Heart left ventricle (tissue), 16 donors: ENCODE measurements at regions of chr1 and their contacts with region 1.

Region 1: DNA sequence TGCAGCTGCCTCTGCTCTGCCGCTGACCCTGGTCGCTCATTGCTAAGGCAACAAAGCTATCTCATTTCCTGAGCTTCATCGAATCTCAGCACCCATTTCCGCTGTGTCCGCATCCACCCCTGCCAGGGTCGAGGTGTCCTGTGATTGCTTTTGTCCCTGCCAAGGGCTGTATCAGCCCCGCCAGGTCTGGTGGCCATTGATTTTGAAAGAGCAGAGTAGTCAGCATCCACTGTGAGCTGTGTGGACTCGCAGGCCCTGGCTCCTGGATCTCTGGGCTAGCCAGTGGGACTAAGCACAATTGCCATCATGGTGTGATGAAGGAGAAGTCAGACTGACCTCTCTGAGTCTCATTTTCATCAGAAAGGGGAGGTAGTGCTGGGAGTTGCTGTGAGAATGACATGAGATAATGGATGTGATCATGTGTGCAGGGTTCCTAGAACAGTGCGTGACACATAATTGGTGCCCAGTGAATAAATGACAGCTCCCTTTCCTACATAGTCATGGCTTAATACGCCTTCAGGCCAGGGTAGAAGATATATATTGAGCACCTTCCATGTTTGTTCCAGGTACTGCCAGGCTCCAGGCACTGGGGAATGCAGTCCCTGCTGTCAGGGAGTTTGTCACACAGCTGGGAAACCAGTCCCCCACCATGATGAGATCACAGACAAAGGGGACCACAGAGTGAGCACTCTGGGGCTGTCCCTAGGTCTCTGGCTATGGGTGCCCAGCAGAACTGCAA is 32.1 kb downstream of the NAV1 start:
- DNase-seq: peak in 2 of 5 donors; percentile 29 to 59
- ATAC-seq: peak; percentile 43 to 56 (median 46)
- H3K4me3 ChIP-seq: no peak overlapping the region
- H3K27ac ChIP-seq: peak overlapping the region in 6 of 12 donors; percentile 38 to 68 (median 52)
- H3K4me1 ChIP-seq: peaks cover 10 to 75% (median 54%) of the 10 kb centered on the region in 12 donors
- H3K27me3 ChIP-seq: no peaks in the 10 kb centered on the region
- CTCF ChIP-seq: no peak
- POLR2A ChIP-seq: no peak

Region 2: GRCh38 chr1:201376464-201377374 is 194.3 kb before region 1 on chr1:
- intact Hi-C with region 1: no loop called
- DNase-seq: peak in 1 of 5 donors; percentile 41
- ATAC-seq: peak in 3 of 4 donors; percentile 3 to 9 (median 5)
- H3K4me3 ChIP-seq: peak overlapping the region; percentile 42 to 76 (median 67)
- H3K27ac ChIP-seq: peak overlapping the region; percentile 79 to 99 (median 96)
- H3K4me1 ChIP-seq: peaks cover 0 to 41% (median 10%) of the 10 kb centered on the region in 12 donors
- H3K27me3 ChIP-seq: no peaks in the 10 kb centered on the region
- CTCF ChIP-seq: peak in 9 of 12 donors; percentile 20 to 52 (median 31)
- POLR2A ChIP-seq: no peak

Region 3: GRCh38 chr1:201530741-201531531 is 40.1 kb before region 1 on chr1:
- intact Hi-C with region 1: no loop called
- DNase-seq: peak; percentile 89 to 91 (median 90)
- ATAC-seq: peak; percentile 75 to 91 (median 88)
- H3K4me3 ChIP-seq: no peak overlapping the region
- H3K27ac ChIP-seq: peak overlapping the region; percentile 25 to 86 (median 64)
- H3K4me1 ChIP-seq: peaks cover 4 to 49% (median 35%) of the 10 kb centered on the region in 12 donors
- H3K27me3 ChIP-seq: no peaks in the 10 kb centered on the region
- CTCF ChIP-seq: peak; percentile 75 to 90 (median 82)
- POLR2A ChIP-seq: no peak

Region 4: GRCh38 chr1:201625226-201625761 is 54.2 kb after region 1 on chr1:
- intact Hi-C with region 1: loop called in 3 of 10 experiments (anchors 5 to 10 kb)
- DNase-seq: no peak
- ATAC-seq: peak in 2 of 4 donors; percentile 29 to 53
- H3K4me3 ChIP-seq: no peak overlapping the region
- H3K27ac ChIP-seq: peak overlapping the region in 1 of 12 donors; percentile 24
- H3K4me1 ChIP-seq: peaks cover 0 to 45% (median 27%) of the 10 kb centered on the region in 12 donors
- H3K27me3 ChIP-seq: no peaks in the 10 kb centered on the region
- CTCF ChIP-seq: no peak
- POLR2A ChIP-seq: no peak

Region 5: DNA sequence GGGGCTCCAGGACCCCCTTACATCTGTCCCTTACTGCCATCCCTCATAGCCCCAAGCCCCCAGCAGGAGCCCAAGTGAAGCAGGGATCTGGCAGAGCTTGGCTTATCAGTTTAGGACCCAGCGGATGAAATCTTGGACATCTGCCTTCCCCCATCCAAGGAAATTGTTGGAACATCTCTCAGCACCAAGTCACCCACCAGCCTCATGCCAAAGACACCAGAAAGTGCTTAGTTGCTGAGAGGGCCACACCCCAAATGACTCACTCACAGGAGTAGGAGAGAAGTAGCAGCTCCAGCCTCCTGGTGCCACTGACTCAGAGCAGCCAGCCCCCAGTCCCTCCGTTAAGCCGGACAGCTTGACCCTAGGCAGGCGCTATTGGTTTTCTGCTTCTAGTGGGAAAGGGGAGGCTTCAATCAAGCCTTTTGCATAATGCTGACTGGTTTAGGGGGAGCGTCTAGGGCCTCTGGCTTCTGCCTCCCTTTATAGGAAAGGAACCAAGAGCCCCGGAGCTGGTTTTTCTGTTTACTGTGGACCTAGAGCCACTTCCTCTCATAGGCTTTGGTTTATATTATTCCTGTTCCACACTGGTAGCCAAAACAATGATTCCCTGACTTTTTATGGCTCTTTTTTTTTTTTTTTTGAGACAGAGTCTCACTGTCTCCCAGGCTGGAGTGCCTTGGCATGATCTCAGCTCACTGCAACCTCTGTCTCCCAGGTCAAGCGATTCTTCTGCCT is 143.7 kb after region 1 on chr1:
- intact Hi-C with region 1: no loop called
- DNase-seq: peak; percentile 53 to 92 (median 80)
- ATAC-seq: peak in 3 of 4 donors; percentile 58 to 74 (median 69)
- H3K4me3 ChIP-seq: peak overlapping the region in 1 of 12 donors; percentile 33
- H3K27ac ChIP-seq: peak overlapping the region; percentile 72 to 98 (median 93)
- H3K4me1 ChIP-seq: peaks cover 34 to 100% (median 89%) of the 10 kb centered on the region in 12 donors
- H3K27me3 ChIP-seq: no peaks in the 10 kb centered on the region
- CTCF ChIP-seq: no peak
- POLR2A ChIP-seq: peak in 1 of 2 donors; percentile 19

Region 6: DNA sequence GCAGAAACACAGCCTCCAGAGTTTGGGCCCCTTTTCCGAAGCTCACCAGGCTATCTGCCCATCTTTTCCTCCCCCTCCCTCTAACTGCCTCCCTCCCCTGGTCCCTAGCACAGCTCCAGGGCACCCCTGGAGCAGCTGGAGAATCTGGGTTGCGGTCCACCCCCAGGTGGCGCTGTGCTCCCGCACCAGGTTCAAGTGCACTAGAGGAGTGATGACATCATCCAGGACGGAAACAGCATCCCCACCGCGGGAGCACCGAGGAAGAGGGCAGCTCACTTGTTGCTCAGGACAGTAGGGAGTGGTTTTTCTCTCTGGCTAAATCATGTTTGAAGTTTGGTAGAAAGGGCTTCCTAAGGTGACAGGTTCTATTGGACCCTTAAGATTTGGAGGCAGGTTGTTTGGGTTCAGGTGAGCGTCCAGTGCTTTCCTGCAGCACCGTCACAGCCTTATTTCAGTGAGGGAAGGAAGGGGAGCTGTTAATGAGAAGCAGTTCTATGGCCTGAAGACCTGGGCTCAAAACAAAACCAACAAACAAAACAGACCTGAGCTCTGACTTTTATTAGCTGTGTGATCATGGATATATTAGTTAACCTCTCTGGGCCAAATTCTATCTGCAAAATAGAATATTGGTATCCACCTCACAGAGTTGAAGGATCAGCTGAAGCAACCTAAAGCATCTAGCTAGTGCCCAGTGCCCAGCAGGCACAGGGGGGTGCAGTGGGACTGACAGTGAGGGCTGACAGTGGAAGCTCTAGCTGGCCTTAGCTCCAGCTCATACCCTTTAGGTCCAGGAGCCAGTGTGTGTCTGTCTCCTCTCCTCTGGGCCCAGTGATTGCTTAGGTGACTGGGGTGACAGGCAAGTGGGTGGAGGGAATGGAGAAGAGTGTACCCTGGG is 325.1 kb after region 1 on chr1:
- intact Hi-C with region 1: no loop called
- DNase-seq: peak; percentile 90 to 94 (median 92)
- ATAC-seq: peak; percentile 77 to 88 (median 84)
- H3K4me3 ChIP-seq: no peak overlapping the region
- H3K27ac ChIP-seq: peak overlapping the region in 11 of 12 donors; percentile 33 to 83 (median 80)
- H3K4me1 ChIP-seq: peaks cover 0 to 36% (median 9%) of the 10 kb centered on the region in 12 donors
- H3K27me3 ChIP-seq: no peaks in the 10 kb centered on the region
- CTCF ChIP-seq: peak; percentile 84 to 96 (median 94)
- POLR2A ChIP-seq: no peak